Left cardiac atrium (tissue), 4 donors: ENCODE measurements at regions of chr11 and their contacts with region 1.

Region 1: GRCh38 chr11:21229224-21229623 is 559.8 kb downstream of the NELL1 start:
- DNase-seq: no peak
- ATAC-seq: no peak

Region 2: DNA sequence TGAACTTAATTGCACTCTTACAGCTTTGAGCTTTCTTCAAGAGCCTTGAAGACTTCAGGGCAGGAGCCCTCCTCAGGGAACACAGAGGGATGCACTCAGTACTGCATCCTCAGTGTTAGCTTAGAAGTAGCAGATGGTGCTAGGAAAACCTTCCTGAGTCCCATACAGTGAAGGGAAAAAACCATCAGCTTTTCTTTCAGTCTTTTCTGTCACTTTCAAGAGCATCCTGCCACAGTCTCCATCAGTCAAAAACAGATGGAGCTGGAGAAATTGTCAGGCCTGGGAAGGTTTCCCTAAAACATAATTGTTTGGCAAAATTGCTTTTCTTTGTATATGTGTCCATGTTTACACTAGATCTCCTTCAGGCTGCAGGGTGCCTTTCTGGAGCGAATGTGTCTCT is 175.8 kb before region 1 on chr11:
- intact Hi-C with region 1: no loop called
- DNase-seq: no peak
- ATAC-seq: no peak

Region 3: GRCh38 chr11:21268036-21268435 is 38.8 kb after region 1 on chr11:
- intact Hi-C with region 1: no loop called
- DNase-seq: no peak
- ATAC-seq: no peak

Region 4: DNA sequence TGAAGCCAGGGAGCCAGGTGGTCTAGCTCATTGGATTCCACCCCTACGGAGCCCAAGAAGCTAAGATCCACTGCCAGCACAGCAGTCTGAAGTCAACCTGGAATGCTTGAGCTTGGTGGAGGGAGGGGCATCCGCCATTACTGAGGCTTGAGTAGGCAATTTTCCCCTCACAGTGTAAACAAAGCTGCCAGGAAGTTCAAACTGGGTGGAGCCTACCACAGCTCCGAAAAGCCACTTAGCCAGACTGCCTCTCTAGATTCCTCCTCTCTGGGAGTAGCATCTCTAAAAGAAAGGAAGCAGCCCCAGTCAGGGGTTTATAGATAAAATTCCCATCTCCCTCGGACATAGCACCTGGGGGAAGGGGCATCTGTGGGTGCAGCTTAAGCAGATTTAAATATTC is 60.5 kb after region 1 on chr11:
- intact Hi-C with region 1: loop called in 1 of 2 experiments (anchors 10 kb)
- DNase-seq: no peak
- ATAC-seq: no peak